PC-3 (cell line): ENCODE measurements at regions of chrX and their contacts with region 1.

Region 1: DNA sequence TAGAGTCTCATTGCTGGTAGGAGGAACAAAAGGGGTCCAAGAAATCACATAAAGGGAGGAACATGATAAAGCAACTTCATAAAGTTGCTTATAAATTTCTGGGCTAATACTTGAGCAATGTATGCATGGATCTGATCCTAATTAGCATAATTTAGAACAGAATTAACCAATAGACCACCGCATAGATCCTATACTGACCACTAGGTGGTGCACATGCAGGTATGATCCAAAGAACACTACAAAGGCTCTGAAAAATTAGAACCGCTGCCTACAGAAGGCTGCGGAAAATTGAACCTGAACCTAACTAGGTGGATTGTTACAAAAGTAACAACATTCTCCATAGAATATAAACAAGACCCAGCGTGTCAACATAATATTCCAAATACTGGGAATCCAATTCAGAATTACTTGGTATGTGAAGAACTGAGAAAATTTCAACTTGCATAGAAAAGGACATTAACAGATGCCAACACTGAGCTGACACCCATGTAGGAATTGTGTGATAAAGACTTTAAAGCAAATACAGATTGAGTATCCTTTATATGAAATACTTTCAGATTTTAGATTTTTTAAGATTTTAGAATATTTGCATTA is 23.3 kb downstream of the BRCC3 start:
- DNase-seq: peak; percentile 58
- ATAC-seq: peak; percentile 75
- H3K4me3 ChIP-seq: no peak overlapping the region
- H3K27ac ChIP-seq: no peak overlapping the region
- H3K4me1 ChIP-seq: no peaks in the 10 kb centered on the region
- H3K27me3 ChIP-seq: no peaks in the 10 kb centered on the region
- CTCF ChIP-seq: peak; percentile 80

Region 2: DNA sequence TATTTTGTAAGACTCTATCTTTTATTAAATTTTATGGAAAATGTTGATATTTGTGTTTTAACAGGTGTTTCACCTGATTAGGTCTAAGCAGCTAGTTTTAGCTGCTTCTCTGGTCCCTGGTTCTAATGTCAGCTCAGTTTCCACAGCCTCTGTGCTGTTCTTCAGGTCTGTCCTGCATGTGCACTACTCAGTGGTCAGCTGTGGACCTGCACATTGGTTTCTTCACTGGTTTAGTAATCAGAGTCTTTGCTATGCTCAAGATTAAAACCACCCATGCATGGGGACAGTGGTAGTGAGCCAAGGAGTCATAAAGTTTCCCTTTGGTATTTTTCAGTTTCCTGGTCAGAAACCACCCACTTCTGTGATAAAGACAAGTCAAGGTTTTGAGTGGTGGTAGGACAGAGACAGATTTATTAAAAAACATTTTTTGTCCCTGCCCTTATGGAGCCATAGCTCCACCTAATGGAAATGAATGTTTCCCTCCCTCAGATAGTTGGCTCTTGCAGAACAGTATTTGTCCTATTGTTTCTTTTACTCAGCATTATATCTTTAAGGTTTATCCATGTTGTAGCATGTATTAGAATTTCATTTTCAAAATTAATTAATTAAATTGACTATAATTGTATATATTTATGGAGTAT is 84.9 kb after region 1 on chrX:
- CTCF ChIA-PET with region 1: interaction called, 4 read pairs
- POLR2A ChIA-PET with region 1: no interaction called
- intact Hi-C with region 1: loop called (anchors 1 kb)
- DNase-seq: peak; percentile 34
- ATAC-seq: peak; percentile 60
- H3K4me3 ChIP-seq: no peak overlapping the region
- H3K27ac ChIP-seq: no peak overlapping the region
- H3K4me1 ChIP-seq: no peaks in the 10 kb centered on the region
- H3K27me3 ChIP-seq: no peaks in the 10 kb centered on the region
- CTCF ChIP-seq: peak; percentile 56; the same call in 1 of the 2 replicates

Region 3: DNA sequence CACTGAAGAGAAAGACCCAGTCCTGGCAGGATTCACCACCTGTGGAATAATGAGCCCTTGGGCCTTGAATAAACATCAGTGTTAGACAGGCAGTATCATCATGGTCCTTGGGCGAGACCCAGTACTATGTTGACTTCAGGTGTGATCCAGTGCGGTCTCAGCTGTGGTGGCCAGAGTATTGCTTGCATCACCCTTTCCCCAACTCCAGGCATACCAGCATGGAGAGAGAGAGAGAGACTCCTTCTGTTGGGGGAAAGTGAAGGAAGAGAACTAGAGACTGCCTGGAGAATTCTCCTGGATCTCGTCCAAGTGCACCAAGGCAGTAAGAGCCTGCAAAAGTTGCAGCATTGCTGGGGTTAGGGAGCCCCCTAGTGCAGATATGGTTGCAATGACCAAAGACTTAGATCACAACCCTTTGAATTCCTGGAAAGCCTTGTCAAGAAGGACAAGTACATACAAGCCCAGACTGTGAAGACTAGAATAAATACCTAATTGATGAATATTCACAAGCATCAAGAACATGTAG is 725.5 kb after region 1 on chrX:
- CTCF ChIA-PET with region 1: no interaction called
- POLR2A ChIA-PET with region 1: no interaction called
- intact Hi-C with region 1: loop called (anchors 2 kb)
- DNase-seq: peak; percentile 72
- ATAC-seq: peak; percentile 77
- H3K4me3 ChIP-seq: no peak overlapping the region
- H3K27ac ChIP-seq: no peak overlapping the region
- H3K4me1 ChIP-seq: no peaks in the 10 kb centered on the region
- H3K27me3 ChIP-seq: no peaks in the 10 kb centered on the region; the same call in 1 of the 2 replicates
- CTCF ChIP-seq: peak; percentile 77